ENCODE measurements at regions of chr19 and their contacts with region 1.

Region 1: DNA sequence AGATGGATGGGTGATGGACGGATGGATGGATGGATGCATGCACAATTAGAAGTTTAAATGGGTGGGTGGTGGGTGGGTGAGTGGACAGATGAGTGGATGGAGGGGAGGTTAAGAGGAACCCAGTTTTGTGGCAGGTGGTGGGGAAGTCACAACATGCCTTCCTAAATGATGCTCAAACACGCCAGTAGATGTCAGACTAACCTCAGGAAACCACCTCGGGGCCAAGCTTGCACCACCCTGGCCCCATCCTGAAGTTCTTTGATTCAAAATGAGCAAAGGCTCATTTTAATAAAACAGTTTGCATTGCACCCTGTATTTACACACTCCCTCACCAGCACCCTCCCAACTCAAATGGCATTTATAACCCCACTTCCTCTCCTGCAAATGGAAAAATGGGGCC is 91.4 kb upstream of the CACNA1A start:
- DNase-seq: peak; percentile 74
- ATAC-seq: peak; percentile 95
- H3K4me3 Mint-ChIP-seq: no peak overlapping the region
- H3K27ac Mint-ChIP-seq: no peak overlapping the region
- H3K4me1 Mint-ChIP-seq: no peaks in the 10 kb centered on the region
- H3K27me3 Mint-ChIP-seq: peaks cover 10% of the 10 kb centered on the region

Region 2: DNA sequence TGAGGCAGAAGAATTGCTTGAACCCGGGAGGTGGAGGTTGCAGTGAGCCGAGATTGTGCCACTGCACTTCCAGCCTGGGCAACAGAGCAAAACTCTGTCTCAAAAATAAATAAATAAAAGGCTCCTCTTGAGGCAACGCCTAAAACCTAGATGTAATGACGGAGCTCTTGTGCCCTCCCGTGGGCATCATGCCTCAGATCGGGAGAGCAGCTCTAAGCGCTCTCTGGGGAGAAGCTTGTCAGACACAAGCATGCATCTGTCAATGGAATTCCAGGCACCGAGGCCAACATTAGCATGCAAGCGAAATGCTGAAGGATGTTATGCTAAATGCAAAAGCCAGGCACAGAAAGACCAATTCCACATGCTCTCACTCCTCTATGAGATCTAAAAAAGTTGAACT is 121.1 kb after region 1 on chr19:
- CTCF ChIA-PET with region 1: interaction called, 5 read pairs
- POLR2A ChIA-PET with region 1: no interaction called
- intact Hi-C with region 1: loop called (anchors 1 to 2 kb)
- DNase-seq: no peak
- ATAC-seq: no peak
- H3K4me3 Mint-ChIP-seq: no peak overlapping the region
- H3K27ac Mint-ChIP-seq: no peak overlapping the region
- H3K4me1 Mint-ChIP-seq: no peaks in the 10 kb centered on the region
- H3K27me3 Mint-ChIP-seq: peaks cover 9% of the 10 kb centered on the region

Region 3: DNA sequence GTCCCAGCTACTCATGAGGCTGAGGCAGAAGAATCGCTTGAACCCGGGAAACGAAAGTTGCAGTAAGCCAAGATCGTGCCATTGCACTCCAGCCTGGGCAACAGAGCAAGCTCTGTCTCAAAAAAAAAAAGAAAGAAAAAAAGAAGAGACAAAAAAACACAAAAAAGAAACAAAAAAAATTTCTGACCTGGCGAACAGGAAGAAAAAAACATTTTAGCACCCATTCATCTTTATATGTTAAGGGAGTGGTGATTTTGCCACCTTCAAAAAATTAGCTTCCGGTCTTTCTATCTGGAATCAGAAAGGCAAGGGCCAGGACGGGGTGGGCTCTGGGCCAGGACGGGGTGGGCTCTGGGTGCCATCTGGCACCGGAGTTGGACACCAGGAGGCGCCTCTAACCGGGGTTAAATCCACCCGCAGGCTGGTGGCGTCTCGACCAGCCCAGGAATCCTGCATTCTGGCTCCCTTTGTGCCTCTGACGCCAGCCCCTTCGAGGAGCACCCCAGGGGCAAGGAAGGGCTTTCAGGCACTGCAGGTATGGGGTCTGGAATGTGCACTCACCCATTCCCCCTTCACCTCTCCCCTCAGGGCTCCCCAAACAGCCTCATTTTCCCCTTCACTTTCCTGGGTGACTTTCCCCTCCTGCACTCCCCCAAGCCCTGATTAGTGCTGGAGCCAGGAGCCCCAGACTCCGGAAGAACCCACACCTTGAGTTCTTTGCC is 187.3 kb after region 1 on chr19:
- CTCF ChIA-PET with region 1: no interaction called
- POLR2A ChIA-PET with region 1: no interaction called
- intact Hi-C with region 1: loop called in 1 of 2 experiments (anchors 1 kb)
- DNase-seq: peak; percentile 88
- ATAC-seq: peak; percentile 84
- H3K4me3 Mint-ChIP-seq: peak overlapping the region; percentile 31
- H3K27ac Mint-ChIP-seq: peak overlapping the region; percentile 66
- H3K4me1 Mint-ChIP-seq: peaks cover 45% of the 10 kb centered on the region
- H3K27me3 Mint-ChIP-seq: no peaks in the 10 kb centered on the region